ENCODE measurements at regions of chr5 and their contacts with region 1.

Region 1: DNA sequence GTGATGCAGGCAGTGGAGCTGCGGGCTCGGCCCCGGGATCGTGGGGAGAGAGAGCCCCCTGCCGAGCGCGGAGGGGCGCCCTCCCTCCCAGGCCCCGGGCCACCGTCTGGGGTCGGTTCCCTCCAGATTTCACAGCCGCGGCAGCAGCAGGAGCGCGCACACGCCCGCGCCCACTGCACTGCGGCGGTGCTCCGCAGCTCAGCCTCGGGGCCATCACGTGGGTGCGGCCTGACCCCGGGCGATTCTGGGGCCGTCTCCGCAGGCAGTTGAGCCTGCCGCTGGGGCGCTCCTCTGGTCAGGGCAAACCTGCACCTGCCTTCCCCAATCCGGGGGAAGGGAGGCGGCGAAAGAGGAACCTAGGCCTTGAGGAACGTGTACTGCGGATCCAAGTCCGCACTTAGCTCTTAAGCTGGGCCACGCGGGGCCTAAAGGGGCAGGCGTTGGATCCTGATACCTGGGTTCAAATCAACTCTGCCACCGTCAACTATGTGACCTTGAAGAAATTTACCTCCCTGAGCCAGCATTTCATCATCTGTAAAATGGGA is 9.4 kb upstream of the DELE1 start:
- DNase-seq: peak; percentile 66 to 74 (median 71)
- ATAC-seq: peak; percentile 91
- H3K4me3 ChIP-seq: peak overlapping the region; percentile 22
- H3K27ac ChIP-seq: no peak overlapping the region
- H3K4me1 ChIP-seq: peaks cover 15% of the 10 kb centered on the region in 2 experiments; a peak in 4 of 5 replicates
- H3K27me3 ChIP-seq: no peaks in the 10 kb centered on the region
- CTCF ChIP-seq: peak; percentile 58 to 71 (median 65)
- EP300 ChIP-seq: no peak
- POLR2A ChIP-seq: no peak
- RAD21 ChIP-seq: peak; percentile 72 to 73

Region 2: GRCh38 chr5:141889282-141889871 is 24.9 kb before region 1 on chr5:
- CTCF ChIA-PET with region 1: interaction called, 13 read pairs
- POLR2A ChIA-PET with region 1: no interaction called
- in situ Hi-C with region 1: no loop called
- intact Hi-C with region 1: loop called (anchors 1 kb)
- DNase-seq: peak in 2 of 4 experiments; percentile 29 to 30
- ATAC-seq: peak; percentile 82
- H3K4me3 ChIP-seq: no peak overlapping the region
- H3K27ac ChIP-seq: no peak overlapping the region
- H3K4me1 ChIP-seq: no peaks in the 10 kb centered on the region; a peak in 1 of 5 replicates
- H3K27me3 ChIP-seq: peaks cover 6 to 7% of the 10 kb centered on the region in 2 experiments
- CTCF ChIP-seq: peak; percentile 36 to 79 (median 54); a peak in 5 of 6 replicates
- EP300 ChIP-seq: no peak
- POLR2A ChIP-seq: no peak
- RAD21 ChIP-seq: peak; percentile 63 to 75

Measured in K562 (cell line).